ENCODE measurements at regions of chr19 and their contacts with region 1.

Region 1: GRCh38 chr19:27966390-27966816 is 1246.5 kb downstream of the UQCRFS1 start:
- DNase-seq: no peak
- ATAC-seq: no peak
- H3K4me3 Mint-ChIP-seq: no peak overlapping the region
- H3K27ac Mint-ChIP-seq: no peak overlapping the region
- H3K4me1 Mint-ChIP-seq: no peaks in the 10 kb centered on the region
- H3K27me3 Mint-ChIP-seq: no peaks in the 10 kb centered on the region

Region 2: GRCh38 chr19:27851002-27851481 is 115.4 kb before region 1 on chr19:
- CTCF ChIA-PET with region 1: no interaction called
- POLR2A ChIA-PET with region 1: no interaction called
- intact Hi-C with region 1: no loop called
- DNase-seq: no peak
- ATAC-seq: no peak
- H3K4me3 Mint-ChIP-seq: no peak overlapping the region
- H3K27ac Mint-ChIP-seq: no peak overlapping the region
- H3K4me1 Mint-ChIP-seq: no peaks in the 10 kb centered on the region
- H3K27me3 Mint-ChIP-seq: no peaks in the 10 kb centered on the region

Region 3: DNA sequence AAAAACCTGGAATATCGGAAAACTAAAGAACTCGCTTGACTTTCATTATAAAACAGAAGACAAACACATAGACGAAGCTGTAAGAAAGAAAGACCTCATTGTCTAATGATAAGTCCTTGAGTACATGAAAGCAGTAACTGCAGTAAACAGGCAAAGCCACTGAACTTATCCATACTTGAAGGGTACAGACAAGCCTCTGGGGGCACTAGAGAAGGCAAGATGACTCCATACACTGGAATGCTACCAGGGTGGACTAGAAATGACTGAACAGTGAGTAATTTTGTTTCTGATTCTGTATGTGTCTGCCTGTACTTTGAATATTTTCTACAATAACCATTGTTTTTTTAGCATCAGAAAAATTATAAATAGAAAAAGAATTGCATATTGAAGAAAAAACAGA is 738.6 kb after region 1 on chr19:
- CTCF ChIA-PET with region 1: interaction called, 6 read pairs
- POLR2A ChIA-PET with region 1: no interaction called
- intact Hi-C with region 1: loop called (anchors 1 to 5 kb)
- DNase-seq: no peak
- ATAC-seq: no peak
- H3K4me3 Mint-ChIP-seq: no peak overlapping the region
- H3K27ac Mint-ChIP-seq: no peak overlapping the region
- H3K4me1 Mint-ChIP-seq: no peaks in the 10 kb centered on the region
- H3K27me3 Mint-ChIP-seq: no peaks in the 10 kb centered on the region

Measured in activated CD4-positive, alpha-beta T cell treated with anti-CD3 and anti-CD28 coated beads for 36 hours (primary cell).